ENCODE measurements at regions of chrX and their contacts with region 1.

Region 1: DNA sequence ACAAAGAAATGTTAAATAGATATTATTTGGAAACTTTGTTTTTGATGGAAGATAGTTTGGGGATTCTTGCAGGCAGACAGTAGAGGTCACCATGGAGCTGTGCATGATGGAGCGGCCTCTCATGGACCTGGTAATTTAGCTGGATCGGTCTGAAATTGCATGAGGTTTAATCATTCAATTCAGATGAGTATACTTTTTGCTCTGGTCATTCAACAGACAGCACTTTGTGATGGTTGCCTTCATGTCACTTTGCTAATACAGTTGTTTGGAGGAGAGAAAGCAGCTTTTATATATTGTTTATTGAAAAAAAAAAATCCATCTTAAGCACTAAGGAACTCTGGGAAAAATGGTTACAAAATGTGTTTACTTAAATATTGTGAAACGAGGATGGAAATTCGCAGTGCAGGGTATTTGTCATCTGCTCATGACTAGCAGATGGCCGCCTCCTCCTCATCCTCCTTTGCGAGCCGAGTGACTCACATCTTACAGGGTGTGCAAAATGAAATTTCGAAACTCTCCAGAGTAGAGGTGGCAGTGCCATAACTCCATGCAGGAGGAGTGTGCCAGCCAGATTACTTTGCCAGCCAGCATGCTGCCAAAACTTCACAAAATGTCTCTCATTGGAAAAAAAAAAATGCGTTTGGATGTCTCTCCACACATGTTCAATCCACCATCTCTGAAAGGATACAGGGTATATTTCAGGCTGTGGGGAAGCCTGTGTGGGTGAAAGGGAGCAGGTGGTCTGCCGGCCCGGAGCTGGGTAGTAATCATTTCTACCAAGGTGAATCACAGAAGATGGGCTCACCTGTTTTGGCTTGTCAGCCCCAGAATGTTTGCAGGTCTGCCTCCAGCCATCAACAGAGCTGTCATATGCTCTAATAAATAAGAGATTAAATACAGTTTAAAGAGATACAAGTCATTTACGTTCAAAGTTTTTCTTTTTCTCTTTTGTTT is 314.9 kb upstream of the DIPK2B start:
- DNase-seq: peak; percentile 50 to 63
- H3K4me3 ChIP-seq: no peak overlapping the region
- H3K4me1 ChIP-seq: peaks cover 3% of the 10 kb centered on the region; the same call in 1 of the 2 replicates
- H3K27me3 ChIP-seq: no peaks in the 10 kb centered on the region

Region 2: DNA sequence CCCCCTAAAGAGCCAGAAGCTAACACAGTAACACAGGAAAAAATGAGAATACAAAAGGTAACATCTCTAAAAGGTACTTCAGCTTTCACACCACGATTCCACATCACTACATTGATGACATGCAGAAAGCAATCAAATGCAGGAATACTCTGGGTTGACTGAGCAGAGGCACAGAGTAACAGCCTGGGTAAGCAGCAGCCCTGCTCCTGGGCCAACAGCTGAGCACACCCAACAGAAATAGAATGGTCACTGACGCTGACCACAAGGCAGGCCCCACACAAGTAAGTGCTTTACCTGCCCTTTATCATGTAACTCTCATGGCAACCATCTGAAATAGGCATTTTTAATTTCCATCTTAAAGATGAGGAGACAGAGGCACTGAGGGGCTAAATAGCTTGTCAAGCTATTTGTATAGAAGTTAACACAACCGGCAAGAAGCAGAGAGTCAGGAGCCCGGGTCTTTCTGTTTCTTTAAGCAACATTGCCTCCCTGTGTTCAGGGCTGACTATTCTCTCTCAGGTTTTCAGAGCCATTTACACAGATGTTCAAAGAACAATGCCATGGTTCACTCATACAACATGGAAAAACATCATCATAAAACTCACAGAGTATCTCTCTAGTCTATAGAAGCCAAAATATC is 860.8 kb after region 1 on chrX:
- in situ Hi-C with region 1: loop called (anchors 25 kb)
- DNase-seq: peak; percentile 61 to 73
- H3K4me3 ChIP-seq: no peak overlapping the region
- H3K4me1 ChIP-seq: no peaks in the 10 kb centered on the region; the same call in 1 of the 2 replicates
- H3K27me3 ChIP-seq: peaks cover 3% of the 10 kb centered on the region; the same call in 1 of the 2 replicates